Ovary (tissue), 10 donors: ENCODE measurements at regions of chr5 and their contacts with region 1.

Region 1: GRCh38 chr5:141855265-141856036 is 22.8 kb downstream of the PCDH1 start:
- DNase-seq: no peak
- H3K4me3 ChIP-seq: no peak overlapping the region
- H3K27ac ChIP-seq: no peak overlapping the region
- H3K4me1 ChIP-seq: no peaks in the 10 kb centered on the region
- H3K27me3 ChIP-seq: no peaks in the 10 kb centered on the region
- CTCF ChIP-seq: no peak
- EP300 ChIP-seq: no peak
- POLR2A ChIP-seq: no peak

Region 2: DNA sequence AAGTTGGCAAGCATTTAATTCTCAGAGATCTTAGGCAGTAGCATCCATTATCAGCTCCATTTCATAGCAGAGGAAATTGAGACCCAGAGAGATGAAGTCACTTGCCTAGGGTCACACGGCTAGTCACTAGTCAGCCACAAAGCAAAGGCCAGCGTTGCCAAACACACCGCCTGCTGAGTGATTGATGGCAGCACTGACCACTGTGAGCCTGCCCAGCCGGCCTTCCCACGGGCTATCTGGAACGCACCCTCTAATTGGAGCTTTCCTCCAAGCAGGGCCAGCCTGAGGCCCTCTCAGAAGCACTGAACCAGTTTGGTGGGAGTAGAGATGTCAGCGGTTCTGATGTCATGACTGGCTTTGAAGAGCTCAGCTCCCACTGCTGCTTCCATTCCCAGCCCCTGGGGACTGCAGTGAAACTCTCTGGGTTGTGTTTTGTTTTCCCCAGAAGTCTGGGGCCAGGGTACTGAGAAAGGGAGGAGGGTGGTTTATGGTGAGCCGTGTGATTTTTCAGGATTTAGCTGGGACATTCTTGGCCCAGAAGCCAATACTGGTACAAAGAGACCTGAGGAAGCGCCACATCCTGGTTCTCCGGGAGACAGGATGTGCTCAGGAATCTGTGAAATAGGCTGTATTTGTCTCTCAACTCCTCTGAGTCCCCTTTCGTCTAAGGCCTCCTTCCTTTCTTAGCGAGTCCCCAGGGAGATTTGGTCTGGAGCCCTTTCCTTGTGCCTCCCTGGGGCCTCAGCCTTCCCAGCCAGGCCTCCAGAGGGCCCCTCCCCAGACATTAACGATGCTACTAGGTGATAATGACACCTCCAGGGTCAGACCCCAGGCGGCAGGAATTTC is 424.8 kb after region 1 on chr5:
- intact Hi-C with region 1: loop called in 1 of 4 experiments (anchors 5 kb)
- DNase-seq: peak in 3 of 5 donors; percentile 22 to 39 (median 26)
- H3K4me3 ChIP-seq: no peak overlapping the region
- H3K27ac ChIP-seq: no peak overlapping the region
- H3K4me1 ChIP-seq: no peaks in the 10 kb centered on the region
- H3K27me3 ChIP-seq: no peaks in the 10 kb centered on the region
- CTCF ChIP-seq: no peak
- EP300 ChIP-seq: no peak
- POLR2A ChIP-seq: no peak

Region 3: DNA sequence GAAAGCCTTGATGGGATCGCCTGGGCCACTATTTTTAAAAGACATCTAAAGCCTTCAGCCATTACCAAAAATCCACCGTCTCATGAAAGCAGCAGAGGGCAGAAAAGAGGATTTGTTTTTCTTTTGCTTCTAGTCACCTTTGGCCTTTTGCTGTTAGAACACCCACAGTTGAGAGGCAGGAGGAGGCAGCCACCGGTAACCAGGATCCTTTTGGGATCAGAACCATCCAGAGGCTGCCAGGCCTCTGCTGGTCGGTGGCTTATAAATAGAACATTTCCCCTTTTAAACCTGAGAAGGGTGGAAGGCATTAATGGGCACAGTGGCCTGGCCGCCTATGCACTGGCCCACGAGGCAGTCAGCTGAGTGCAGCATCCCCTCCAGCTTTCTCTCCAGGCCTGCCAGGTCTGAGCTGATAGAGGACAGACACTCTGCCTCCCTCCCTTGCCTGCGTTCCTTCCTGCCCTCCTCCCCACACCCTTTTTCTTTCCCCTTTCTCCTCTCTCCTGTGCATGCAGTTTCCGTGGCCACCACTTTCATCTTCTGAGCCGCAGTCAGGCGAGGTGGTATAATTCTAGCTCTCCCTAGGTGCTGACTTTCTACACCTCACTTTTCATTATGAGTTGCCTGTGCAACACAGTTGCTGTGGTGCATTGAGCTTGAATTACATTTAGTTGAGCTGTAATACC is 1168.1 kb after region 1 on chr5:
- intact Hi-C with region 1: no loop called
- DNase-seq: peak in 4 of 5 donors; percentile 10 to 42 (median 24)
- H3K4me3 ChIP-seq: no peak overlapping the region
- H3K27ac ChIP-seq: no peak overlapping the region
- H3K4me1 ChIP-seq: peaks cover 5% of the 10 kb centered on the region
- H3K27me3 ChIP-seq: no peaks in the 10 kb centered on the region
- CTCF ChIP-seq: no peak
- EP300 ChIP-seq: no peak
- POLR2A ChIP-seq: no peak